ENCODE measurements at regions of chr16 and their contacts with region 1.

Region 1: GRCh38 chr16:57244767-57245471 is at the start of gene ARL2BP:
- DNase-seq: peak; percentile 92 to 98 (median 97)
- ATAC-seq: peak; percentile 95
- H3K4me3 ChIP-seq: peak within 1 kb of the TSS; percentile 68 to 76
- H3K4me3 Mint-ChIP-seq: peak within 1 kb of the TSS; percentile 92
- H3K27ac ChIP-seq: peak within 1 kb of the TSS; percentile 50 to 87
- H3K27ac Mint-ChIP-seq: peak within 1 kb of the TSS; percentile 96
- H3K4me1 ChIP-seq: peaks cover 9% of the 10 kb centered on the region
- H3K4me1 Mint-ChIP-seq: peaks cover 19% of the 10 kb centered on the region
- H3K27me3 ChIP-seq: no peaks in the 10 kb centered on the region
- H3K27me3 Mint-ChIP-seq: no peaks in the 10 kb centered on the region
- CTCF ChIP-seq: no peak
- total RNA-seq, gene ARL2BP: 32.8 to 35.2 TPM

Region 2: GRCh38 chr16:57071831-57072582 is 172.9 kb before region 1 on chr16:
- CTCF ChIA-PET with region 1: no interaction called
- POLR2A ChIA-PET with region 1: no interaction called
- intact Hi-C with region 1: no loop called
- DNase-seq: peak in 2 of 9 experiments; percentile 39 to 66
- ATAC-seq: peak; percentile 14
- H3K4me3 ChIP-seq: no peak overlapping the region
- H3K4me3 Mint-ChIP-seq: no peak overlapping the region
- H3K27ac ChIP-seq: peak overlapping the region; percentile 15 to 59
- H3K27ac Mint-ChIP-seq: peak overlapping the region; percentile 64
- H3K4me1 ChIP-seq: peaks cover 9% of the 10 kb centered on the region
- H3K4me1 Mint-ChIP-seq: peaks cover 18% of the 10 kb centered on the region
- H3K27me3 ChIP-seq: no peaks in the 10 kb centered on the region
- H3K27me3 Mint-ChIP-seq: no peaks in the 10 kb centered on the region
- CTCF ChIP-seq: no peak

Region 3: DNA sequence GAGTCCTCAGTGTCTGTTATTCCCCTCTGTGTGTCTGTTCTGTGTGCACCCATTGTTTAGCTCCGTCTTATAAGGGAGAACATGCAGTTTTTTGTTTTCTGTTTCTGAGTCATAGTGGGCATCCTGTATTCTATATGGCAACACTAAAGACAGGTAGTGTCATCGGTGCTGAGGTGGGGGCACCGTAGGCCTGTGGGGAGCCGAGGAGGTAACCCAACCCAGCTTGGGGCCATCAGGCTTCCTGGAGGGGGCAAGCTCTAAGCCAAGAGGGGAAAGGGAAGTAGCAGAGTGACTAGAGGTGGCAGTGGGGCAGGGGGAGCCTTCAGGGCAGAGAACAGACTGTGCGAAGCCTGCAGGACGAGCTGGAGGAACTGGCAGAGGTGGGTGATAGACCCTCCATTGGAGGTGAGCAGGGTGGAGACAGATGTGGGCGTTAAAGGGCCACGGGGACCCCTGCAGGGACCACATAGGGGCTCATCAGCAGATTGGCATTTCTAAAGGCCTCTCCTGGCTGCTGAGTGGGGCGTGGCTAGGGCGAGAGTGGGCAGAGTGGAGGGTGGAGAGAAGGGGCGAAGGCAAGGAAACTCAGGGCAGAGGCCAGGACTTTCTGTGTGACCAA is 116.0 kb before region 1 on chr16:
- CTCF ChIA-PET with region 1: no interaction called
- POLR2A ChIA-PET with region 1: no interaction called
- intact Hi-C with region 1: no loop called
- DNase-seq: peak in 8 of 9 experiments; percentile 53 to 88 (median 70)
- ATAC-seq: peak; percentile 89
- H3K4me3 ChIP-seq: peak overlapping the region; percentile 42 to 44
- H3K4me3 Mint-ChIP-seq: peak overlapping the region; percentile 83
- H3K27ac ChIP-seq: peak overlapping the region; percentile 45 to 71
- H3K27ac Mint-ChIP-seq: peak overlapping the region; percentile 97
- H3K4me1 ChIP-seq: peaks cover 92% of the 10 kb centered on the region
- H3K4me1 Mint-ChIP-seq: peaks cover 92% of the 10 kb centered on the region
- H3K27me3 ChIP-seq: no peaks in the 10 kb centered on the region
- H3K27me3 Mint-ChIP-seq: no peaks in the 10 kb centered on the region
- CTCF ChIP-seq: no peak

Region 4: GRCh38 chr16:57141822-57142631 is 102.9 kb before region 1 on chr16:
- CTCF ChIA-PET with region 1: no interaction called
- POLR2A ChIA-PET with region 1: no interaction called
- intact Hi-C with region 1: no loop called
- DNase-seq: peak in 5 of 9 experiments; percentile 29 to 58 (median 38)
- ATAC-seq: peak; percentile 91
- H3K4me3 ChIP-seq: peak overlapping the region in 1 of 2 experiments; percentile 3
- H3K4me3 Mint-ChIP-seq: peak overlapping the region; percentile 75
- H3K27ac ChIP-seq: peak overlapping the region; percentile 19 to 42
- H3K27ac Mint-ChIP-seq: peak overlapping the region; percentile 98
- H3K4me1 ChIP-seq: peaks cover 56% of the 10 kb centered on the region
- H3K4me1 Mint-ChIP-seq: peaks cover 68% of the 10 kb centered on the region
- H3K27me3 ChIP-seq: no peaks in the 10 kb centered on the region
- H3K27me3 Mint-ChIP-seq: no peaks in the 10 kb centered on the region
- CTCF ChIP-seq: no peak

Region 5: DNA sequence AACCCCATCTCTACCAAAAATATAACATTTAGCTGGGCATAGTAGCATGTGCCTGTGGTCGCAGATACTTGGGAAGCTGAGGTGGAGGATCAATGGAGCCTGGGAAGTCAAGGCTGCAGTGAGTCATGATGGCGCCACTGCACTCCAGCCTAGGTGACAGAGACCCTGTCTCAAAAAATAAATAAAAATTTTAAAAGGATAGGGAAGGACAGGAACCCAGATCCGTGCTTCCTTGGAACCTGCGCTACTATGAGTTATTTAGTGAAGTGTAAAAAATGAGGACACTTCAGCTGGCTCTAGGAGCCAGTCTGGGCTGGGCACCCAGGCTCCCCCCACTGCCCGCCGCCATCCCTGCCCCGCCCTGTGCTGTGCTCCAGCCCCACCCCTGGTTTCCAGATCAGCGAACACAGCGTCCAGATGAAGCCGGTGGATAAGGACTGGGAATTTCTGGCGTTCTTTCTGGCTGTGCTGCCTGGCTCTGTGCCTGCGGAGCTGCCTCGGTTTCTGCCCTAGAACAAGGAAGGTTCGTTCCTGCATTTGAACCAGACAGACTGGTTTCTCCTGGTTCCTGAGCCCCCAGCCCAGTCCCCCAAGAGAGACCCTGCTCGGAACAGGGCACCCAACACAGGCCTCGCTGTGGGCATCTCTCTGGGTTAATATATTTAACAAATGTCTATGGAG is 21.1 kb after region 1 on chr16:
- CTCF ChIA-PET with region 1: interaction called, 3 read pairs
- POLR2A ChIA-PET with region 1: interaction called, 4 read pairs
- intact Hi-C with region 1: loop called (anchors 1 to 2 kb)
- DNase-seq: no peak
- ATAC-seq: no peak
- H3K4me3 ChIP-seq: peak overlapping the region in 1 of 2 experiments; percentile 10
- H3K4me3 Mint-ChIP-seq: peak overlapping the region; percentile 27
- H3K27ac ChIP-seq: peak overlapping the region; percentile 36 to 68
- H3K27ac Mint-ChIP-seq: peak overlapping the region; percentile 91
- H3K4me1 ChIP-seq: peaks cover 53% of the 10 kb centered on the region
- H3K4me1 Mint-ChIP-seq: peaks cover 42% of the 10 kb centered on the region
- H3K27me3 ChIP-seq: no peaks in the 10 kb centered on the region
- H3K27me3 Mint-ChIP-seq: no peaks in the 10 kb centered on the region
- CTCF ChIP-seq: no peak

Region 6: GRCh38 chr16:57413301-57413730 is 168.4 kb after region 1 on chr16:
- CTCF ChIA-PET with region 1: interaction called, 13 read pairs
- POLR2A ChIA-PET with region 1: no interaction called
- intact Hi-C with region 1: loop called (anchors 1 to 2 kb)
- DNase-seq: peak in 1 of 9 experiments; percentile 22
- ATAC-seq: no peak
- H3K4me3 ChIP-seq: no peak overlapping the region
- H3K4me3 Mint-ChIP-seq: no peak overlapping the region
- H3K27ac ChIP-seq: no peak overlapping the region
- H3K27ac Mint-ChIP-seq: no peak overlapping the region
- H3K4me1 ChIP-seq: peaks cover 18% of the 10 kb centered on the region
- H3K4me1 Mint-ChIP-seq: peaks cover 9% of the 10 kb centered on the region
- H3K27me3 ChIP-seq: no peaks in the 10 kb centered on the region
- H3K27me3 Mint-ChIP-seq: peaks cover 4% of the 10 kb centered on the region
- CTCF ChIP-seq: no peak

Region 7: GRCh38 chr16:57447186-57447962 is 202.5 kb after region 1 on chr16 and contains the starts of genes CIAPIN1 and COQ9:
- CTCF ChIA-PET with region 1: no interaction called
- POLR2A ChIA-PET with region 1: interaction called, 3 read pairs
- intact Hi-C with region 1: loop called in 1 of 2 experiments (anchors 1 kb)
- DNase-seq: peak; percentile 85 to 97 (median 92)
- ATAC-seq: peak; percentile 98
- H3K4me3 ChIP-seq: peak within 1 kb of the TSS; percentile 93 to 96
- H3K4me3 Mint-ChIP-seq: peak within 1 kb of the TSS; percentile 91
- H3K27ac ChIP-seq: peak within 1 kb of the TSS; percentile 79 to 83
- H3K27ac Mint-ChIP-seq: peak within 1 kb of the TSS; percentile 93
- H3K4me1 ChIP-seq: peaks cover 20% of the 10 kb centered on the region
- H3K4me1 Mint-ChIP-seq: peaks cover 53% of the 10 kb centered on the region
- H3K27me3 ChIP-seq: no peaks in the 10 kb centered on the region
- H3K27me3 Mint-ChIP-seq: no peaks in the 10 kb centered on the region
- CTCF ChIP-seq: no peak
- total RNA-seq, gene CIAPIN1: 28.6 to 29.7 TPM
- total RNA-seq, gene COQ9: 8.1 to 11.7 TPM

Region 8: DNA sequence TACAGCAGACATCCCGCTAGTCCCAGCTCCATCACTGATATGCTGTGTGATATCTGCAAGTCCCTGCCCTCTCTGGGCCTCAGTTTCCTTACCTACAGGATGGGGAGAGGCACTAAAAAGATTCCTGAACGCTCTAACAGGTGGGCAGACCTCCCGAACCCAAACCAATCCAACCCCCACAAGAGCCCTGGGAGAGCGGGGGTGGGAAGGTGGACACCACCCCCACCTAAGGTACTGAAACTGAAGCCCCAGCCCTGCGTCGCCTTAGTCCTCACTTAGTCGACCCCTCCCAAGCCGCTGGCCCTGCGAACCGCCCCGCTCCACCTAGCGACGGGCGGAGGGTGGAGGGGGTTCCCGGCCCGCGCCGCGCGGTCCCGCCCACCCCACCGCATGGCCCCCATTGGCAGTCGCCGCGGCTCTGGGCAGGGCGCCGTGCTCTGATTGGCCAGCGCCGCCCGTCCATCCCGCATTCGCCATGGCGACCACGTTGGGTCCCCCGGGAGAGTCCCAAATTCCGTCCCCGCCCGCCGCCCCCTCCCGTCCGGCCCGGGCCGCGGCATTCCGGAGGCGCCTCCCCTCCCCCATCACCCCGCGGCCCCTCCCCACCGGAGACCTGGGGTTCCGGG is 290.9 kb after region 1 on chr16:
- CTCF ChIA-PET with region 1: no interaction called
- POLR2A ChIA-PET with region 1: no interaction called
- intact Hi-C with region 1: loop called in 1 of 2 experiments (anchors 1 kb)
- DNase-seq: peak; percentile 83 to 97 (median 92)
- ATAC-seq: peak; percentile 82
- H3K4me3 ChIP-seq: peak overlapping the region; percentile 69 to 80
- H3K4me3 Mint-ChIP-seq: peak overlapping the region; percentile 81
- H3K27ac ChIP-seq: peak overlapping the region; percentile 64 to 96
- H3K27ac Mint-ChIP-seq: peak overlapping the region; percentile 96
- H3K4me1 ChIP-seq: peaks cover 81% of the 10 kb centered on the region
- H3K4me1 Mint-ChIP-seq: peaks cover 70% of the 10 kb centered on the region
- H3K27me3 ChIP-seq: no peaks in the 10 kb centered on the region
- H3K27me3 Mint-ChIP-seq: no peaks in the 10 kb centered on the region
- CTCF ChIP-seq: no peak

Measured in CD8-positive, alpha-beta T cell (primary cell).